Natural killer cell (primary cell): ENCODE measurements at regions of chr21 and their contacts with region 1.

Region 1: GRCh38 chr21:31198575-31198974 is 145.5 kb downstream of the TIAM1 start:
- DNase-seq: peak in 1 of 2 donors; percentile 72
- ATAC-seq: peak in 2 of 3 donors; percentile 45 to 53
- H3K4me3 ChIP-seq: no peak overlapping the region
- H3K4me3 Mint-ChIP-seq: no peak overlapping the region
- H3K27ac ChIP-seq: no peak overlapping the region
- H3K27ac Mint-ChIP-seq: no peak overlapping the region
- H3K4me1 ChIP-seq: no peaks in the 10 kb centered on the region
- H3K4me1 Mint-ChIP-seq: no peaks in the 10 kb centered on the region
- H3K27me3 ChIP-seq: no peaks in the 10 kb centered on the region
- H3K27me3 Mint-ChIP-seq: no peaks in the 10 kb centered on the region
- CTCF ChIP-seq: peak; percentile 80

Region 2: GRCh38 chr21:31580866-31581276 is 382.3 kb after region 1 on chr21:
- intact Hi-C with region 1: loop called (anchors 1 kb)
- DNase-seq: peak; percentile 61 to 85
- ATAC-seq: peak; percentile 77 to 95 (median 88)
- H3K4me3 ChIP-seq: no peak overlapping the region
- H3K4me3 Mint-ChIP-seq: no peak overlapping the region
- H3K27ac ChIP-seq: no peak overlapping the region
- H3K27ac Mint-ChIP-seq: no peak overlapping the region
- H3K4me1 ChIP-seq: no peaks in the 10 kb centered on the region
- H3K4me1 Mint-ChIP-seq: no peaks in the 10 kb centered on the region
- H3K27me3 ChIP-seq: no peaks in the 10 kb centered on the region
- H3K27me3 Mint-ChIP-seq: peaks cover 0 to 3% of the 10 kb centered on the region in 2 donors
- CTCF ChIP-seq: peak; percentile 92

Region 3: GRCh38 chr21:31604591-31605190 is 406.1 kb after region 1 on chr21:
- intact Hi-C with region 1: loop called (anchors 1 kb)
- DNase-seq: peak; percentile 48 to 88
- ATAC-seq: peak; percentile 61 to 76 (median 68)
- H3K4me3 ChIP-seq: no peak overlapping the region
- H3K4me3 Mint-ChIP-seq: no peak overlapping the region
- H3K27ac ChIP-seq: no peak overlapping the region
- H3K27ac Mint-ChIP-seq: no peak overlapping the region
- H3K4me1 ChIP-seq: peaks cover 2% of the 10 kb centered on the region
- H3K4me1 Mint-ChIP-seq: no peaks in the 10 kb centered on the region
- H3K27me3 ChIP-seq: peaks cover 2% of the 10 kb centered on the region
- H3K27me3 Mint-ChIP-seq: peaks cover 0 to 4% of the 10 kb centered on the region in 2 donors
- CTCF ChIP-seq: peak; percentile 95